ENCODE measurements at regions of chr2 and their contacts with region 1.

Region 1: GRCh38 chr2:234496835-234497591 is at the start of gene ARL4C:
- DNase-seq: peak; percentile 88
- CTCF ChIP-seq: no peak

Region 2: GRCh38 chr2:233814056-233814835 is 682.8 kb before region 1 on chr2:
- in situ Hi-C with region 1: no loop called
- DNase-seq: no peak
- CTCF ChIP-seq: no peak

Region 3: GRCh38 chr2:234135720-234136221 is 361.2 kb before region 1 on chr2:
- in situ Hi-C with region 1: loop called (anchors 10 kb)
- DNase-seq: peak; percentile 58
- CTCF ChIP-seq: peak; percentile 71

Region 4: DNA sequence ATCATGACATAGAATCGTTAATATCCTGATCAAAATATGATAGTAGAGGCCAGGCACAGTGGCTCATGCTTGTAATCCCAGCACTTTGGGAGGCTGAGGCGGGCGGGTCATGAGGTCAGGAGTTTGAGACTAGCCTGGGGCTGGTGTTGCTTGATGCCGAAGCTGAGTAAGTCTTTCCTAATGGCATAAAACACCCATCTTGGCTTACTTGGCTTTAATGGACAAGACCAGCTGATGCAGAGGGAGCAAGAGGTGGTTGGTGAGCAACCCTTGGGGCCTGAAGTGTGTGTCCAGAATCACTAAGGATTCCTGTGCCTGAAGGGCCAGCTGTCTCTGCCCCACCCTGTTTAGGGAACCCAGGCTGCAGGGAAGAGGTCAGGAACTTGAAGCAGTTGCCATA is 217.4 kb before region 1 on chr2:
- in situ Hi-C with region 1: loop called (anchors 5 kb)
- DNase-seq: no peak
- CTCF ChIP-seq: no peak

Measured in GM13977 (cell line).